Aorta (tissue), 5 donors: ENCODE measurements at regions of chr2 and their contacts with region 1.

Region 1: DNA sequence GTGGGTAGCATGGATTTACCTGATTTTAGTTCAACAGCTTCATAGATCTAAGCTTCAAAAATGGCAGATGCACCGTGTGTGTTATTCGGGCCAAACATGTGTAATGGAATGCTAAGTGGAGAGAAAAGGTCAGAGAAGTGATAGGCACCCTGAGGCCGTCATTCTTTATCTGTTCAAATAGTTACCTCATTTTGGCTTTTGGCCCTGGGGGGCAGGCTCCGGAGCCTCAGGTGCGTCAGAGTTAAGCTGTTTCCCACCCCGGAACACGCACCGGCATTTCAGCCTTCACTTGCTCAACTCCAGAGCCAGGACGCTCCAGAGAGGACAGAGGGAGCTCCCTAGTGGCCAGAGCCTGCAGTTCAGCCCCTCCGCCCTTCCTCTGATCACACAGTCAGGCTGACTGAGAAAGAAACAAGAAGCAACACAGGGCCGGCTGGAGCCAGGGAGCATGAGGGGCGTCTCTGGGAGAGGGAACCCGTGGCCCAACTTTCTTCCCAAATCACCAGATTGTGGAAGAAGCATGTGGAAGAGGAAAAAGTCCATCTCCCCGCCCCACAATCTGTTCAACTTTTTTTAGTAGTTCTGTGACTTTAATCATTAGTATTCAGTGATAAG is 135.2 kb upstream of the EPC2 start:
- DNase-seq: peak; percentile 89 to 94
- ATAC-seq: peak; percentile 95
- H3K4me3 ChIP-seq: peak overlapping the region; percentile 40 to 82
- H3K27ac ChIP-seq: peak overlapping the region in 1 of 2 donors; percentile 78
- H3K4me1 ChIP-seq: peaks cover under 1 to 3% of the 10 kb centered on the region in 2 donors
- H3K27me3 ChIP-seq: no peaks in the 10 kb centered on the region

Region 2: GRCh38 chr2:147937744-147938349 is 571.5 kb before region 1 on chr2:
- intact Hi-C with region 1: loop called in 1 of 2 experiments (anchors 10 kb)
- DNase-seq: no peak
- ATAC-seq: no peak
- H3K4me3 ChIP-seq: no peak overlapping the region
- H3K27ac ChIP-seq: no peak overlapping the region
- H3K4me1 ChIP-seq: no peaks in the 10 kb centered on the region
- H3K27me3 ChIP-seq: no peaks in the 10 kb centered on the region

Region 3: DNA sequence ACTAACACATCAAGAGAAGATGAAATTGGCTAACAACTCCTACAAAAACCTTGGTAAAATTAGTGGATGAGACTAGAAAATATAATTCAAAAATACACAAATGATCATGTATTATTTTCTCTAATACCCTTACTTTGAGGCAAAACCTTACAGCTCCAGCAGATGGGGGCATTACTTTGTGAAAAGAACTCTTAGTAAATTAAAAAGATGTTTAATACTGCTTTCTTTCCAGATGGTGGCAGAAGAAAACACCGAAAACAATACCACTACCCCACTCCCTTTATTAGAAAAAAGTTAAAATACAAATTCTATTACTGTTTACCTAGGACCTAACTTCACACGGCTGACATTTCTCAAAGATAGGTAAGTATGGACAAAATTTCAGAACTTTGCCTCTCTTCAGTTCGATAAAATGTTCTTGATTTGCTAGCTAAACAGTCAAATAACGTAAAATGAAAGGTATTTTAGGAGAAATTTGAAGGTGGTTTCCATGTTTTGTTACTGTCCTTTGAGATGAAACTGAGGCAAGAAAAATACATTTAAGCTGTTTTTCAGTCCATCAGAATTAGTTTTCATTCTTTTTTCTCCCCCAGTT is 519.5 kb before region 1 on chr2:
- intact Hi-C with region 1: loop called (anchors 5 kb)
- DNase-seq: no peak
- ATAC-seq: peak; percentile 74
- H3K4me3 ChIP-seq: no peak overlapping the region
- H3K27ac ChIP-seq: no peak overlapping the region
- H3K4me1 ChIP-seq: peaks cover 0 to 2% of the 10 kb centered on the region in 2 donors
- H3K27me3 ChIP-seq: no peaks in the 10 kb centered on the region

Region 4: GRCh38 chr2:148201075-148202004 is 308.1 kb before region 1 on chr2:
- intact Hi-C with region 1: loop called in 1 of 2 experiments (anchors 10 kb)
- DNase-seq: peak; percentile 51 to 75
- ATAC-seq: no peak
- H3K4me3 ChIP-seq: no peak overlapping the region
- H3K27ac ChIP-seq: no peak overlapping the region
- H3K4me1 ChIP-seq: no peaks in the 10 kb centered on the region
- H3K27me3 ChIP-seq: no peaks in the 10 kb centered on the region

Region 5: GRCh38 chr2:148552675-148553331 is 43.4 kb after region 1 on chr2:
- intact Hi-C with region 1: no loop called
- DNase-seq: no peak
- ATAC-seq: no peak
- H3K4me3 ChIP-seq: no peak overlapping the region
- H3K27ac ChIP-seq: no peak overlapping the region
- H3K4me1 ChIP-seq: no peaks in the 10 kb centered on the region
- H3K27me3 ChIP-seq: no peaks in the 10 kb centered on the region

Region 6: DNA sequence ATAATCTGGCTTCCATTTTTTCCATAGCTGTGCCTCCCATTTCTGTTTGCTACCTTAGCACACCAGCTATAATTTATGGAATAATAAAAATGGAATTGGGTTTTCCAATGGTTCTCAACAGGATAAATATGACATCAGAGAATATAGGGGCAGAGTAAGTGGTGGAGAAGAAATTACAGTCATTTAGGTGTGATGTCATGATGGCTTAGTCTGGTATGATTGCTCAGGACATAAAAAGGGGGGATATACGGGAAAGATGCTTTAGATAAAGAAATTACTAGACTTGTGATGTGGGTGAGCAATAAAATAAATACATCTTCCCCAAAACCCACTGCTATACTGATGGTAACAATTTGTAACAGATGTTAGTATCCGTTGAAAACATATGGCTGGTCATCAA is 344.1 kb after region 1 on chr2:
- intact Hi-C with region 1: no loop called
- DNase-seq: no peak
- ATAC-seq: no peak
- H3K4me3 ChIP-seq: no peak overlapping the region
- H3K27ac ChIP-seq: no peak overlapping the region
- H3K4me1 ChIP-seq: no peaks in the 10 kb centered on the region
- H3K27me3 ChIP-seq: no peaks in the 10 kb centered on the region